ENCODE measurements at regions of chr19 and their contacts with region 1.

Region 1: GRCh38 chr19:46076951-46077816 is 36.4 kb upstream of the IGFL4 start:
- DNase-seq: peak in 1 of 2 donors; percentile 47
- H3K4me3 ChIP-seq: peak overlapping the region; percentile 5 to 64 (median 41)
- H3K27ac ChIP-seq: no peak overlapping the region
- H3K4me1 ChIP-seq: no peaks in the 10 kb centered on the region
- H3K27me3 ChIP-seq: peaks cover 2 to 10% of the 10 kb centered on the region in 2 donors
- CTCF ChIP-seq: peak; percentile 48 to 93 (median 69)
- POLR2A ChIP-seq: no peak

Region 2: DNA sequence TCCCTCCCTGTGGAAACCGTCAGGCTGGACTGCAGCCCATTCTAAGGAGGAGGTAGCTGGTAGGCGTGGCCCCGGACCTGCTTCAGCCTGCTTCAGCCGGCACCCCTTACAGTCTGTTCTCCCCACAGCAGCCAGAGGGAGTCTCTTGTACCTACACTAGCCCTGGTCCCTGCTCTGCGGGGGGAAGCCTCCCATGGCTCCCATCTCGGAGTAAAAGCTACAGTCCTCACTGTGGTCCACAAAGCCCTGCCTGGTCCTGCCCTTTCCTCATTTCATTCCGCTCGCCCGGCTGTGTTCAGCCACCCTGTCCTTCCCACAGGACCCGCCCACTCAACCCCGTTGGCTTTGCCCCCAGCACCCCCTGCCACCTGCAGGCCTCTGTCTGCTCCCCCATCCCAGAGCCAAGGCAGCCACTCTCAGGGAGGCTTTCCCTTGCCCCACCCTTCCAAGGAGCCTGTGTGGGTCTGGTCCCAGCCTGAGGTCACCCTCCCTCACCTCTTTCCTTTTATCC is 55.6 kb before region 1 on chr19:
- intact Hi-C with region 1: loop called (anchors 10 kb)
- DNase-seq: peak in 1 of 2 donors; percentile 48
- H3K4me3 ChIP-seq: no peak overlapping the region
- H3K27ac ChIP-seq: no peak overlapping the region
- H3K4me1 ChIP-seq: no peaks in the 10 kb centered on the region
- H3K27me3 ChIP-seq: peaks cover 0 to 6% of the 10 kb centered on the region in 2 donors
- CTCF ChIP-seq: no peak
- POLR2A ChIP-seq: no peak

Region 3: GRCh38 chr19:46124638-46125115 is 47.5 kb after region 1 on chr19 and contains the start of gene IGFL3:
- intact Hi-C with region 1: no loop called
- DNase-seq: no peak
- H3K4me3 ChIP-seq: no peak within 1 kb of the TSS
- H3K27ac ChIP-seq: peak within 1 kb of the TSS in 1 of 2 donors; percentile 23
- H3K4me1 ChIP-seq: no peaks in the 10 kb centered on the region
- H3K27me3 ChIP-seq: no peaks in the 10 kb centered on the region
- CTCF ChIP-seq: no peak
- POLR2A ChIP-seq: no peak
- total RNA-seq, gene IGFL3: not detected

Region 4: DNA sequence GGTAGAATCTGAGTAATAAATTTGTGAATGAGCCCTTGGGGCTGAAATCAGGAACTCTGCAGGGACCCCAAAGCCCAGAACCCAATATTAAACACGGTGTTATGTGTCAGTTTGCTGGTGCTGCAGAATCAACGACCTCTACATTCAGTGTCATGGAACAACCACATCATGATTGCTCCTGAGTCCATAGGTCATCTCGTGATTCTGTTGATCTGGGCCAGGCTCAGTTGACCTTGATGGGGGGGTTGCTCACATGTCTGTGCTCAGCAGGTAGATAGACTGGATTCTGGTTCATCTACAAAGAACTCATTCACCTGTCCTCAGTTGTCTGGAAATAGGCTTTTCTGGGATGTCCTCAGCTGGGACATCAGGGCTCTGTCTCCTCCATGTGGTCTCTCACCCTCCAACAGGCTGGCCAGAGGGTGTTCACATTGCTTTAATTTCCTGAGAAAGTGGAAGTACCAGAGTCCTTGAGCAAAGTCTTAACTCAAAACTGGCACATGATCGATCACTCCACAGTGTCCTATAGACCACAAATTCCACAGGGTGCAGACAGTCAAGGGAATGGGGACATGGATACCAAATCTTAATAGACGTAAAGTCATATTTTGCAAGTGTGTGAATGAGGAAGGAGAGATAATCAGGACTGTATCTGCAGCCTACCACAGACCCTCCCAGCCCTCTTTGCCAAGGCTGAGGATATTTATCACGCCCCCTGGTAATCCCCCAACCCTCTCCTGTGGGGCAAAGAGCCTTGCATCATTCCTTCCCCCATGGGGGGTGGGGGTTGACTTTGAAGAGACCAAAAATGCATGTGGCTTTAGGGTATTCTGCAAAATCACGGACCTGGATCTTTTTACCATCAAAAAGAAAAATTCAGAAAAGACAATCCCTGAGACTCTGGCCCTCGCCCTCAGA is 113.0 kb after region 1 on chr19:
- intact Hi-C with region 1: loop called (anchors 1 kb)
- DNase-seq: no peak
- H3K4me3 ChIP-seq: no peak overlapping the region
- H3K27ac ChIP-seq: no peak overlapping the region
- H3K4me1 ChIP-seq: no peaks in the 10 kb centered on the region
- H3K27me3 ChIP-seq: peaks cover 0 to 17% of the 10 kb centered on the region in 2 donors
- CTCF ChIP-seq: no peak
- POLR2A ChIP-seq: no peak

Region 5: DNA sequence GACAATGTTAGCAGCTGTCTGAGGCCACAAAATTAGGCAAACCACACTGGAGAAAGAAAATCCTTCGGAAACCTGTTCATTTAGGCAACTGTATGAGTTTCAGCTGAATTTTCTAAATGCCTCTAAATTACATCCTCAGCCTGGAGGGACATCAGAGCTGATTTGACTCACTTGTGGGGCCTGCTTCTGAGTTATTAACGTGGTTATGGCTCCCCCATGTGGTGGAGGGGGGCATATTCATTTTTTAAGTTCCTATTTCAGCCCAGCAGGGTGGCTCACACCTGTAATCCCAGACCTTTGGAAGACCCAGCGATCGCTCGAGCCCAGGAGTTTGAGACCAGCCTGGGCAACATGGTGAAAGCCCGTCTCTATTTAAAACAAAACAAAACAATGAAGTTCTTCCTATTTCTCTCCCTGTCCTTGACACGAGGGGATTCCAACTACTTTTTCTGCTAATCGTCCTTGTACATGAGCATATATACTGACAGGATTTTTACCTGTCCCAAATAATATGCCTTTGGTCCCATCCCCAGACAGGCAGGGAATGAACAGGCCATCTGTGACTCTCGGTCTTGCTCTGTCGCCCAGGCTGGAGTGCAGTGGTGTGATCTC is 188.1 kb after region 1 on chr19:
- intact Hi-C with region 1: loop called (anchors 2 kb)
- DNase-seq: peak in 1 of 2 donors; percentile 42
- H3K4me3 ChIP-seq: no peak overlapping the region
- H3K27ac ChIP-seq: no peak overlapping the region
- H3K4me1 ChIP-seq: no peaks in the 10 kb centered on the region
- H3K27me3 ChIP-seq: peaks cover 0 to 5% of the 10 kb centered on the region in 2 donors
- CTCF ChIP-seq: peak; percentile 90 to 98 (median 95)
- POLR2A ChIP-seq: no peak